Activated CD4-positive, alpha-beta T cell treated with anti-CD3 and anti-CD28 coated beads for 36 hours (primary cell): ENCODE measurements at regions of chr9 and their contacts with region 1.

Region 1: GRCh38 chr9:131125128-131126058 is at the start of gene NUP214:
- DNase-seq: peak; percentile 100
- ATAC-seq: peak; percentile 100
- H3K4me3 Mint-ChIP-seq: peak within 1 kb of the TSS; percentile 94
- H3K27ac Mint-ChIP-seq: peak within 1 kb of the TSS; percentile 92
- H3K4me1 Mint-ChIP-seq: peaks cover 31% of the 10 kb centered on the region
- H3K27me3 Mint-ChIP-seq: no peaks in the 10 kb centered on the region
- total RNA-seq, gene NUP214: 61.4 to 97.7 TPM

Region 2: GRCh38 chr9:130693426-130694191 is 431.8 kb before region 1 on chr9 and contains the start of gene EXOSC2:
- CTCF ChIA-PET with region 1: no interaction called
- POLR2A ChIA-PET with region 1: no interaction called
- intact Hi-C with region 1: loop called in 1 of 2 experiments (anchors 2 kb)
- DNase-seq: peak; percentile 99
- ATAC-seq: peak; percentile 98
- H3K4me3 Mint-ChIP-seq: peak within 1 kb of the TSS; percentile 97
- H3K27ac Mint-ChIP-seq: peak within 1 kb of the TSS; percentile 98
- H3K4me1 Mint-ChIP-seq: peaks cover 44% of the 10 kb centered on the region
- H3K27me3 Mint-ChIP-seq: no peaks in the 10 kb centered on the region
- total RNA-seq, gene EXOSC2: 67.9 to 86.0 TPM

Region 3: GRCh38 chr9:131053896-131054295 is 71.5 kb before region 1 on chr9:
- CTCF ChIA-PET with region 1: interaction called, 5 read pairs
- POLR2A ChIA-PET with region 1: no interaction called
- intact Hi-C with region 1: loop called in 1 of 2 experiments (anchors 1 kb)
- DNase-seq: no peak
- ATAC-seq: no peak
- H3K4me3 Mint-ChIP-seq: no peak overlapping the region
- H3K27ac Mint-ChIP-seq: no peak overlapping the region
- H3K4me1 Mint-ChIP-seq: no peaks in the 10 kb centered on the region
- H3K27me3 Mint-ChIP-seq: no peaks in the 10 kb centered on the region

Region 4: GRCh38 chr9:131277910-131278701 is 152.7 kb after region 1 on chr9:
- CTCF ChIA-PET with region 1: interaction called, 4 read pairs
- POLR2A ChIA-PET with region 1: no interaction called
- intact Hi-C with region 1: loop called in 1 of 2 experiments (anchors 1 kb)
- DNase-seq: peak; percentile 88
- ATAC-seq: peak; percentile 55
- H3K4me3 Mint-ChIP-seq: peak overlapping the region; percentile 75
- H3K27ac Mint-ChIP-seq: peak overlapping the region; percentile 71
- H3K4me1 Mint-ChIP-seq: peaks cover 22% of the 10 kb centered on the region
- H3K27me3 Mint-ChIP-seq: peaks cover 7% of the 10 kb centered on the region

Region 5: DNA sequence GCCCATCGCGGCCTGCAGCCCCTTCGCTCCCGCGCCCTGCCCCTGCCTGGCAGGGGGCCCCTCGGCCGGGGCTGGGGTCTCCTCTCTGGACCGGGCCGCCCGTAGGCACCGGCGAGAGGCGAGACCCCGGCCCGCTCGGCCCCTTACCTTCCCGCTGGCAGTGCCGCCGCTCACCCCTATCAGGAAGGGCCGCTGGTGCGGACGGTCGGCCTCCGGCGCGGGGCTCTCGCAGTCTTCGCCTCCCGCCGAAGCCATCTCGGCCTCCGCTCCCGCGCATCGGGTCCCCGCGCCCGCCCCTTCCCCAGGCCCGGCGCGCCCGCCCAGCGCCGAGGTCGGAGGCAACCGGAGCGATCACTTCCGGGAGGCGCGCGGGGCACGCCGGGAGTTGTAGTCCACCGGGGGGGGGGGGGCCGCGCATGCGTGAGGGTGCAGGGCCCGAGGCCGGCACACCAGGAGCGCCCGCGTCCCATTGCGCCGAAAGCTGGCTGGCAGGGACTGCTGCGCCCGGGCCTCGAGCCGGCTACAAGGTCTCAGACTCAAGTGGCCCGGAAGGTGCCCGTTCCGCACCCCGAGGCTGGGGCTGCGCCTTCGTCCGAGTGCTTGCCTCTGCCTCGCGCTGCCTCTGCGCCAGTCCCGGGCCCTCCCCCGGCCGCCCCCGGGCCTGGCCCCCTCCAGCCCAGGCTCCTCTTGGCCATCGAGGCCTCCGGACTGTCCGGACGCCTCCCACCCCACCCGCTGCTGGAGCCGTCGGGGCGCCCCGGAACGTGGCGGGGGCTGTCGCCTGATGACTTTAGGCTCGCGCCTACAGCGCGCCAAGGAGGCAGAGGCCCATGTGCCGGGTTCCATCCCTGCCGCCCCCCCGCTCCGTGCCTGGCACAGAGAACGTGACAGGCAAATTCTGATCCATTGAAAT is 405.8 kb after region 1 on chr9 and contains the start of gene UCK1:
- CTCF ChIA-PET with region 1: no interaction called
- POLR2A ChIA-PET with region 1: no interaction called
- intact Hi-C with region 1: loop called in 1 of 2 experiments (anchors 1 kb)
- DNase-seq: peak; percentile 89
- ATAC-seq: peak; percentile 95
- H3K4me3 Mint-ChIP-seq: peak within 1 kb of the TSS; percentile 78
- H3K27ac Mint-ChIP-seq: peak within 1 kb of the TSS; percentile 69
- H3K4me1 Mint-ChIP-seq: peaks cover 29% of the 10 kb centered on the region
- H3K27me3 Mint-ChIP-seq: no peaks in the 10 kb centered on the region
- total RNA-seq, gene UCK1: 15.2 to 16.5 TPM

Region 6: DNA sequence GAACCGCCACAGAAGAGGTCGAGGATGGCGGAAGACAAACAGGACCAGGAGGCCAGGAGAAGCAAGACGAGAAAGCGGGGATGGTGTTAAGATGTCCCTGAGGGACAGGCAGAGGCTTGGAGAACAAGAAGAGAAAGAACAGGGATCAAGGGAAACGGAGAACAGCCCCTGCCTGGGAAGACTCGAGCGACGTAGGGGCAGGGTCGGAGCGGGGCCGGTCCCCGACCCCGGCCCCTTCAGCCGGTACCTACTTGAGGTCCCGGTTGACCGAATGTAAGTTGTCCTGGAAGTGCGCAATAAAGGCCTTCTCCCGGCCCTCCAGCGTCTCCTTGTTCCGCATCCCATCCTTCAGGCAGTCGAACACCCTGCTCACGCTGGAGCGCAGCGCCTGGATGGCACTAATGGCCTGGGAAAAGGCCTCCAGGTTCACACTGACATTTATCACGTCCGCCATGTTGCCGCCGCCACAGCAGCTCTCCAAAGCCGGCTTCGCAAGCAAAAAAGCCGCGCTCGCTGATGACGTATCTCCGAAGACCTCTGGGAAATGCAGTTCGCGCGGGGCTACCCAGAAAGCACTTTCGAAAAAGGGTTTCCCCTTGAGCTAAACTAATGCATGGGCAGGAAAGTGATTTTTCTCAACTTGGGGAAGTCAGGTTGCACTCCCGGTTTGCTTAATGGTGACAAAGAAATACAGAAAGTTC is 954.1 kb after region 1 on chr9 and contains the start of gene MED27:
- CTCF ChIA-PET with region 1: no interaction called
- POLR2A ChIA-PET with region 1: no interaction called
- intact Hi-C with region 1: loop called (anchors 10 kb)
- DNase-seq: peak; percentile 97
- ATAC-seq: peak; percentile 94
- H3K4me3 Mint-ChIP-seq: peak within 1 kb of the TSS; percentile 96
- H3K27ac Mint-ChIP-seq: peak within 1 kb of the TSS; percentile 86
- H3K4me1 Mint-ChIP-seq: peaks cover 41% of the 10 kb centered on the region
- H3K27me3 Mint-ChIP-seq: no peaks in the 10 kb centered on the region
- total RNA-seq, gene MED27: 29.1 to 32.5 TPM